ENCODE measurements at regions of chr2 and their contacts with region 1.

Region 1: DNA sequence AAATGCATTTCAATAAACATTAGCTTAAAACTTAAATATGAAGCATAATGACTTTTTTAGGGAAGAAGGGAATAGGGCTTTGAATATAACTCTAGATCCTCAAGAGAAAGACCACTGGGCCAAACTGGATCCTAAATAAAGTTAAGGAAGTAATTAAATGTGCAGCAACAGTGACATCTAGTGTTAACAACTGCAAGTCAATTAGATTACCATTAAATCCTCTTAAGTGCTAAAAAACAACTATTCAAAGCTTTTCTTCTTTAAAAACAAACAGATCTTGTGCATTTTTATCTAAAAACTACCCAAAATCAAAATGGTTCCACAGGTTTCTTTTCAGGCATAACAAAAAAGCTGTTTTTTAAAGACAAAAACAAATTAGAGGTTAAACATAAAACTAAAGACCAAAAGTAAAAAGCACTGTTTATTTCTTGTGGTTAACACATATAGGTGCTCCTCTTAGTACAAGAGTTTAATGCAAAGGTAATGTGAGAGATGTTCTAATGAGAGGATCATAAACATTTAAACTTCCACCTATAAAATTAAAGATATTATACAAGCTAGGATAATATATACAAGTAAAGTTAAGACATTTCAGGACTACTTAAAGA is 111.4 kb downstream of the THADA start:
- DNase-seq: no peak
- ATAC-seq: peak; percentile 30

Region 2: DNA sequence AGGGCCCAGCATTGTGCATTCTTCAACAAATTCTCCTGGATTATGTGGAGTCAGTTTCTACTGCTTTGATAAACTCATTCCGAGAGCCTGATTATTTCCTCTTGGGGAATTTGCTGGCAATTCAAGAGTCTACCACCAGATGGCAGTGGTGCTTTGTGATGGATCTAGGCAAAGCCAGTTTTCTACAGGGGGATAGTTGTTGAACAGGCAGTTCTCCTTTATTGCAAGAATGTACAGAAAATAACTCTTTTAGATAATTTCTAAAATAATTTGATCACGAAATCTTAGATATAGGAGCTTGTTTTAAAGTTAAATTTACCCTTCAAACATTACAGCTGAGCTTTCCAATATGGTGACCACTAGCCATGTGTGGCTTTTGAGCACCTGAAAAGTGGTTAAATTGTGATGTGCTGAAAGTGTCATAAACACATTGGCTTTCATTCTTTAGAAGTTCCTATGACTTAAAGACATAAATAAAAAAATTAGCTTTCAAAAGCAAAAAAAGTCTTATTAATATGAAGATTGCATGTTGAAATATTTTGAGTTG is 625.3 kb before region 1 on chr2:
- intact Hi-C with region 1: loop called (anchors 10 kb)
- DNase-seq: no peak
- ATAC-seq: no peak

Region 3: DNA sequence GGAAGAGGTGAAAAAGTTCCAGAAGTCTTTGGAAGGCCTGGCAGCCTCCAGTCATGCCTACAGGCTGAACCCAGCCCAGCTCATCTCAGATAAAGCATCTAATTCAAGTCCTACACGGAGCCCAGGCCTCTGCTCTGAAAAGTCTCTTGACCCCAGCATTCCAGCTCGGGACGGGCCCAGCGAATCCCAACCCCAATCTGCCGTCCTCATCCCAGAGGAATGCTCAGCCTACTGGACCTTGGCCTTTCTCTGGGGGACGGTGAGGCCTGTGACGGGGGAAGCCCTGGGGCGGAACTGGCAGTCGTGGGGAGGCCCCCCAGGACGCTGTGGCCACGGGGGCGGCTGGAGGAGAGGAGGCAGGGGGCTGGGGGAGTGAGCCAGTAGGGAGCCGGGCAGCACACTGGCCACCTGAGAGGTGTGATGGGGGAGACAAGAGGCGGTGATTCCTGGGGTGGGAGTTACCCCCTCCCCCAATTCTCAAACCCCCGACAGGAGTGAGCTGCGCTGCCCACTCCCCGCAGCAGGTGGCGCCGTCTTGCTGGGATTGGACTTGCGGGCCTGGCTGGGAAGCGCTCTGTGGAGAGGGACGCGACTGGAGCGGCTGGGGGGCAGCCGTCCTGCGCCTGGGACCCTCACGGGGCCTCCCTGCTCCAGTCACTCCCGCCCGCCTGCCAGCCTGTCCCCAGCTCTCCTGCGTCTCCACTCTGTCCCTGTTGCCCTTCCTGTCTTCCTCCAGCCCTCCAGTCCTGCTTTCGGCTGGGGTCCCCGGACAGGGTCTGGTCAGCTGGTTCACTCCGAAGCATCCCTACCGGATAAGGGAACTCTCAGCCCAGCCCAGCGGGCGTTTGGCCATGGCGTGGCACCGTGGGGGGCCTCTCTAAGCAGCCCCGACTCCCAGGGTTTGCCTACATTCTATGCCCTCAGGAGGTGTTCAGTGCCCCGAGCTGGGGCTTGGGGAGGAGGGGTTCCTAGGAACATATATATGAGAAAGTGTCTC is 509.4 kb before region 1 on chr2:
- intact Hi-C with region 1: loop called (anchors 2 kb)
- DNase-seq: peak; percentile 87
- ATAC-seq: peak; percentile 88

Region 4: DNA sequence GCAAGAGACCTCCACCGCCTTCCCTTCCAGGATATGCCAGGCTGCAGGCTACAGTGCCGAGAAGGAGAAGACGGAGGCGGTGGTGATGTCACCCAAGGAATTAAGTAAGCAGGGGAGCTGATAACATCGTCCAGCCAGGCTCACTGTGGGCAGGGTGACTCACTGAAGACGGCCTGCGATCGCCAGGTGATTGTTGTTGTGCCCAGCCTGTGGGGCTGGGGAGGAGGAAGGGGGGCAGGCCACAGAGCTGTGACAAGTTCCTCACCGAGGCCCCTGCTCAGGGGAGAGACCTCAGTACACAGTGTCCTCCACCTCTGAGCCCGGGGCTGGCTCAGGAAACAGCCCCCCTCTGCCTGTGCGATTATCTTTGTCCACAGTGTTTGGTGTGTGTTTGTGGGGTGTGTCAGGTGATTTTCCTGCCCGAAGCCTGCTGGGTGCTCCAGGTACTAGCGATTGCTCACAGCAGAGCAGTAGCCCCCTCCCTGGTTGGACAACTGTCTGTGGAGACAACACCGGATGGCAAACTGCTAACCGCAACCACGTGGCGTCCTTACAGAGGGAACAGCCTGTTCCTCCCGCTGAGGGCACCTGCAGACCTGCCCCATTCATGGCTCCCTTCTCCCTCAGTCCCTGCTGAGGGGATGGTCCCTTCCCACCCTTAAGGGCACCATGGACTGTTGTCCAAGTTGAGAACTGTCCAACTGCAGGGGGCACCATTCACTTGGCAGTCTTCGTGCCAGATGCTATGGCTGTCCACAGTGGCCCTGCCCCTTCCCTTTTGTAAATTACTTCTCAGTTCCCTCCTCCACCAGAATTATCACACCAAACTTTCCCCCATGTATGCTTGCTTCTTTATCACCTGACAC is 353.2 kb before region 1 on chr2:
- intact Hi-C with region 1: loop called (anchors 2 kb)
- DNase-seq: peak; percentile 90
- ATAC-seq: peak; percentile 58

Region 5: GRCh38 chr2:43269074-43269572 is 215.3 kb before region 1 on chr2:
- intact Hi-C with region 1: loop called (anchors 5 kb)
- DNase-seq: peak; percentile 93
- ATAC-seq: peak; percentile 86

Region 6: GRCh38 chr2:43324259-43325106 is 159.9 kb before region 1 on chr2:
- intact Hi-C with region 1: no loop called
- DNase-seq: peak; percentile 80
- ATAC-seq: peak; percentile 94

Region 7: DNA sequence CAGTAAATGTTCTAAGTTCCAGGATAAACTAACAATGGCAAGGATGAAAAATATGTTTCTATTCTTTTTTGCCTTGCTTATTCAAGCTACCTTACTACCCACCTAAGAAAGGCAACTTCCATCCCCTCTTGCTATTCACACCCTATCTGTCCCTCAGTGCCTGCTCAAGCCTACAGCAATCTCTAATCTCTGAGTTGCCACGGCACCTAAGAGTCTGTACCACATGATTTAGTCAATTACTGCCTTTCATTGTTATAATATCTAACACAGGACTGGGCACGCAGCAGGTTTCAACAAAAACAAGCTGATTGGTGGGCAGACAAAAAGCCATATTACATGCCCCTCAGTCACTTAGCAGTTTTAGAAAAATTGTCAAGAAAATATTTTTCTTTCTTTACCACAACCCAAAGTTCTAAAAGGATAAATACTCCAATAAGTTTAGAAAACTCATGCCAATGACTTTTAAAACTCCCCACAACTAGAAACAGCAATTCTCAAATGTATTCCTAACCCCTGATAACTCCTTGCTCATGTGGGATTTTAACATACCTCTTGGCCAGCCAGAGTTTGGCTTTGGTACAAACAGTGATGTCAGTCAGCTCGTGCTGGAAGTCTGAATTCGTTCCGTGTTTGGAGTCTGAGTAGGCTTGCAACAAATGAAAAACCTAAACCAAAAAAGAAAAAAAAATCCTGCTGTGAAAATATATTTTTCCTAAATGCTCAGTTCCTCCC is 140.7 kb before region 1 on chr2:
- intact Hi-C with region 1: loop called (anchors 5 kb)
- DNase-seq: peak; percentile 73
- ATAC-seq: peak; percentile 78

Measured in Right ventricle myocardium inferior (tissue), 1 donor.